Adrenal gland (tissue), 19 donors: ENCODE measurements at regions of chr14 and their contacts with region 1.

Region 1: GRCh38 chr14:50357124-50357820 is 39.4 kb downstream of the CDKL1 start:
- DNase-seq: no peak
- H3K4me3 ChIP-seq: no peak overlapping the region
- H3K27ac ChIP-seq: no peak overlapping the region
- H3K4me1 ChIP-seq: no peaks in the 10 kb centered on the region
- H3K27me3 ChIP-seq: no peaks in the 10 kb centered on the region
- CTCF ChIP-seq: no peak
- POLR2A ChIP-seq: no peak

Region 2: GRCh38 chr14:49820176-49820575 is 537.1 kb before region 1 on chr14:
- intact Hi-C with region 1: no loop called
- DNase-seq: no peak
- H3K4me3 ChIP-seq: no peak overlapping the region
- H3K27ac ChIP-seq: no peak overlapping the region
- H3K4me1 ChIP-seq: no peaks in the 10 kb centered on the region
- H3K27me3 ChIP-seq: no peaks in the 10 kb centered on the region
- CTCF ChIP-seq: no peak
- POLR2A ChIP-seq: no peak

Region 3: GRCh38 chr14:50389668-50390441 is 32.6 kb after region 1 on chr14:
- intact Hi-C with region 1: loop called in 1 of 2 experiments (anchors 5 kb)
- DNase-seq: no peak
- H3K4me3 ChIP-seq: no peak overlapping the region
- H3K27ac ChIP-seq: no peak overlapping the region
- H3K4me1 ChIP-seq: peaks cover 12 to 16% of the 10 kb centered on the region in 2 donors
- H3K27me3 ChIP-seq: no peaks in the 10 kb centered on the region
- CTCF ChIP-seq: no peak
- POLR2A ChIP-seq: no peak

Region 4: GRCh38 chr14:50599700-50600444 is 242.6 kb after region 1 on chr14:
- intact Hi-C with region 1: no loop called
- DNase-seq: no peak
- H3K4me3 ChIP-seq: no peak overlapping the region
- H3K27ac ChIP-seq: no peak overlapping the region
- H3K4me1 ChIP-seq: no peaks in the 10 kb centered on the region
- H3K27me3 ChIP-seq: no peaks in the 10 kb centered on the region
- CTCF ChIP-seq: peak; percentile 20 to 67 (median 58)
- POLR2A ChIP-seq: no peak